ENCODE measurements at regions of chr10 and their contacts with region 1.

Region 1: DNA sequence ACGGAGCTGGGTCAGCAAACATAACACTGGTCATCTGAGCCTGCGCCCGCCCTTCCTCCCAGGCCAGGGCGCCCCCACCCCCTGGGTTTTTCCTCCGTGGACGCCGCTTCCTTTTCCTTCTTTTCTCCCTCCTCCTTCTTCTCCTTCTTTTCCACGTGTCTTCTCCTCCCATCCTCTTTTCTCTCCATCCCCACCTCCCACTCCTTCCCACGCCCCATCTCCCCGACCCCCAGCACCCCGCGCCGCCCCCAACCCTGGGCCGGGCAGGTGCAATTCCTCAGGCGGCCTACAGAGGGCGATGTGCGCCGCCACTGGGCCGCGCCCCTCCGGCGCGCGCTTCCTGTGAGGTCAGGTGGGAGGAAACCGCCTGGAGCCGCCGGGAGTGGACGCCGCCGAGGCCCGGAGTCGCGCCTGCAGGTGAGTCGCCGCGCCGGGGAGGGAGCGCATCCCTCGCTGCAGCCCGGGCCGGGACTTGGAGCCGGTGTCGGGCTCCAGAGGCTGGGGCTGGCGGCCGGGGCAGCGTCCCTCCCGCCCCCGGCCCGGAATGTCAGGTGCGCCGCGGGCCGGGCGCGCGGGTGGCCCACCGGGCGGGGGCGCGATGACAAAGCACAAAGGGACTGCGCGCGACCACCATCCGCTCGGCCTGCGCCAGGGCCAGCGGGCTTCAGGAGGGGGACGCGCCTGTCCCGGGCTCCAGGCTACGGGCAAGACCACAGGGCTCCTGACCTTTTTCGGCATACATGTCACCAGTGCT is at the start of gene FAM241B:
- DNase-seq: peak; percentile 61 to 86 (median 85)
- ATAC-seq: peak; percentile 80 to 81
- H3K4me3 ChIP-seq: peak within 1 kb of the TSS; percentile 46
- H3K27ac ChIP-seq: no peak within 1 kb of the TSS
- H3K4me1 ChIP-seq: no peaks in the 10 kb centered on the region
- H3K27me3 ChIP-seq: no peaks in the 10 kb centered on the region
- total RNA-seq, gene FAM241B: 4.6 to 8.7 (median 6.7) TPM

Region 2: GRCh38 chr10:69515699-69516259 is 114.3 kb before region 1 on chr10:
- intact Hi-C with region 1: loop called in 3 of 4 experiments (anchors 2 to 5 kb)
- DNase-seq: peak; percentile 64 to 85 (median 85)
- ATAC-seq: peak; percentile 84 to 88
- H3K4me3 ChIP-seq: no peak overlapping the region
- H3K27ac ChIP-seq: no peak overlapping the region
- H3K4me1 ChIP-seq: no peaks in the 10 kb centered on the region
- H3K27me3 ChIP-seq: no peaks in the 10 kb centered on the region

Measured in right cardiac atrium (tissue), 5 donors.